ENCODE measurements at regions of chrX and their contacts with region 1.

Region 1: GRCh38 chrX:111244235-111244750 is 26.0 kb downstream of the CAPN6 start:
- DNase-seq: no peak
- H3K4me3 ChIP-seq: no peak overlapping the region
- H3K4me3 Mint-ChIP-seq: no peak overlapping the region
- H3K27ac Mint-ChIP-seq: no peak overlapping the region
- H3K4me1 ChIP-seq: no peaks in the 10 kb centered on the region
- H3K4me1 Mint-ChIP-seq: no peaks in the 10 kb centered on the region
- H3K27me3 ChIP-seq: no peaks in the 10 kb centered on the region
- H3K27me3 Mint-ChIP-seq: peaks cover 2% of the 10 kb centered on the region
- CTCF ChIP-seq: peak; percentile 23 to 30

Region 2: GRCh38 chrX:110853610-110854009 is 390.7 kb before region 1 on chrX:
- CTCF ChIA-PET with region 1: interaction called, 4 read pairs
- POLR2A ChIA-PET with region 1: no interaction called
- intact Hi-C with region 1: loop called (anchors 10 kb)
- DNase-seq: peak in 1 of 2 experiments; percentile 1
- H3K4me3 ChIP-seq: no peak overlapping the region
- H3K4me3 Mint-ChIP-seq: no peak overlapping the region
- H3K27ac Mint-ChIP-seq: no peak overlapping the region
- H3K4me1 ChIP-seq: no peaks in the 10 kb centered on the region
- H3K4me1 Mint-ChIP-seq: no peaks in the 10 kb centered on the region
- H3K27me3 ChIP-seq: no peaks in the 10 kb centered on the region; the same call in 1 of the 2 replicates
- H3K27me3 Mint-ChIP-seq: peaks cover 4% of the 10 kb centered on the region
- CTCF ChIP-seq: no peak

Region 3: GRCh38 chrX:110992611-110993010 is 251.7 kb before region 1 on chrX:
- CTCF ChIA-PET with region 1: no interaction called
- POLR2A ChIA-PET with region 1: no interaction called
- intact Hi-C with region 1: loop called (anchors 1 kb)
- DNase-seq: peak; percentile 32
- H3K4me3 ChIP-seq: no peak overlapping the region
- H3K4me3 Mint-ChIP-seq: no peak overlapping the region
- H3K27ac Mint-ChIP-seq: no peak overlapping the region
- H3K4me1 ChIP-seq: no peaks in the 10 kb centered on the region
- H3K4me1 Mint-ChIP-seq: no peaks in the 10 kb centered on the region
- H3K27me3 ChIP-seq: no peaks in the 10 kb centered on the region
- H3K27me3 Mint-ChIP-seq: peaks cover 9% of the 10 kb centered on the region
- CTCF ChIP-seq: peak in 1 of 2 experiments; percentile 55

Region 4: GRCh38 chrX:111100186-111100980 is 143.9 kb before region 1 on chrX:
- CTCF ChIA-PET with region 1: interaction called, 5 read pairs
- POLR2A ChIA-PET with region 1: no interaction called
- intact Hi-C with region 1: loop called (anchors 5 kb)
- DNase-seq: peak in 1 of 2 experiments; percentile 24
- H3K4me3 ChIP-seq: no peak overlapping the region
- H3K4me3 Mint-ChIP-seq: no peak overlapping the region
- H3K27ac Mint-ChIP-seq: no peak overlapping the region
- H3K4me1 ChIP-seq: no peaks in the 10 kb centered on the region
- H3K4me1 Mint-ChIP-seq: no peaks in the 10 kb centered on the region
- H3K27me3 ChIP-seq: no peaks in the 10 kb centered on the region
- H3K27me3 Mint-ChIP-seq: peaks cover 7% of the 10 kb centered on the region
- CTCF ChIP-seq: peak; percentile 16 to 28

Region 5: DNA sequence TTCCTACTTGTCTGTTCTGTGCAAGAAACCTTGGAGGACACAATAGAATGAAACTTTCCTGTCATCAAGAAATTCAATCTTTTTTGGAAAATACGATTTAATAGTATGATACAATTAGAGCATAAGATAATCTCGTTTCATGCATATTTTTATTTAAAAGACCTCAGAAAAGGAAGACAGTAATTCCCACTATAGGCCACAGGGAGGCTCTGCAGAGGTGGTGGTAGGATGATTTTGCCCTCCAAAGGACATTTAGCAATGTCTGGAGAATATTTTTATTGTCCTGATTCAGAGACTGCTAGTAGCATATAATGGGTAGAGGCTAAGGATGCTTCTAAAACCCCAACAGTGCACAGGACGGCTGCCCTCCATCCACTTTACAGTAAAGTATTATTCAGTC is 79.6 kb before region 1 on chrX:
- CTCF ChIA-PET with region 1: interaction called, 5 read pairs
- POLR2A ChIA-PET with region 1: no interaction called
- intact Hi-C with region 1: loop called (anchors 1 kb)
- DNase-seq: no peak
- H3K4me3 ChIP-seq: no peak overlapping the region
- H3K4me3 Mint-ChIP-seq: no peak overlapping the region
- H3K27ac Mint-ChIP-seq: no peak overlapping the region
- H3K4me1 ChIP-seq: no peaks in the 10 kb centered on the region
- H3K4me1 Mint-ChIP-seq: no peaks in the 10 kb centered on the region
- H3K27me3 ChIP-seq: no peaks in the 10 kb centered on the region
- H3K27me3 Mint-ChIP-seq: peaks cover 6% of the 10 kb centered on the region
- CTCF ChIP-seq: peak in 1 of 2 experiments; percentile 15

Measured in Caco-2 (cell line).